GM10248 (cell line): ENCODE measurements at regions of chr9 and their contacts with region 1.

Region 1: DNA sequence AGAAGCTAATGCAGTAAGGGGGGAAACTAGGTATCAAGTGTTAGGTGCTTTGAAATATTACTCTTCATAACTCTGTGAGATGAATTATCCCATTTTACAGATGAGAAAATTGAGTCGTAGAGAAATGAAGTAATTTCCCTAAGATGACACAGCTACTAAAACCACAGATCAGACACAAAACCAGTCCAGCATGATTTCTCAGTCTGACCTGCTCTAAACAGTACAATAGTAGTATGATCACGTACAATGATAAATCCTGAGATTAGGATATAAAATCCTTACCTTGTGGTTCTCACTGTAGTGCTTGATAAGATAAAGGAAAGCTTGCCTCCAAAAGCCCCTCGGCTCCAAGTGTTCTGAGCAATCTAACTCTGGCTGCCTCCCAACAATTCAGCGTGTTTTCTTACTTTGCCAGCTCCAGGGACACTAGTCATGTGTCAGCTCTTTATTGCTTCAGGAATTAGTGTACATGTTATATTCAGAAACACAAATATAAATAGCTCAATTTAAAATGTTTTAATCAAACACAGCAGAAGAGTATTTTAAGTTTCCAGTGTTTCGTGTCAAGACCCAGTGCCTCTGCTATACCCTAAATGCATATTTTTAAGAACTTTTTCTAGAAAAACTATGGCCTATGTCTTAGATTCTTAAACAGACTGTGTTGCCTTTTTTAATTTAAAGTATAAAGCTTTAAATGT is 243.6 kb downstream of the DENND1A start:
- DNase-seq: no peak
- CTCF ChIP-seq: no peak

Region 2: GRCh38 chr9:123658792-123659191 is 27.5 kb before region 1 on chr9:
- CTCF ChIA-PET with region 1: no interaction called
- POLR2A ChIA-PET with region 1: no interaction called
- DNase-seq: peak; percentile 22
- CTCF ChIP-seq: no peak

Region 3: DNA sequence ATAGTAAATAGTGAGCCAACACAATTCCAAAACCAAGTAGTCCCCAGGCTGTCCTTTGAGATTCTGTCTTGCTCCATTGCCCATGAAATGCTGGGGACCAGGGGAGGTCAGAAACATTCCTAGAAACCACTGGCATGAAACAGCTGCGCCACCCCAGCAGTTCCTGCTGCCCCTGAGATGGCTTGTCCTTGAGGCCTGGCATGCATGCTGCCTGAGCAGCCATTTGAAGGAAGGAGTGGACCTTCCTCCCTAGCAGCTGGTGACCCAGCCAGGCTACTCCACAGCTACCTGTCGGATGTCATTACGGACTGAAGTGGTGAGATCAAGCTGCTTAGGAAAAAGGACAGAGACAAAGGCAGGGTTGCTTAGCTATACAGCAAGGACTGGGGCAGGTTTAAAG is 16.9 kb before region 1 on chr9:
- CTCF ChIA-PET with region 1: no interaction called
- POLR2A ChIA-PET with region 1: no interaction called
- DNase-seq: no peak
- CTCF ChIP-seq: no peak

Region 4: DNA sequence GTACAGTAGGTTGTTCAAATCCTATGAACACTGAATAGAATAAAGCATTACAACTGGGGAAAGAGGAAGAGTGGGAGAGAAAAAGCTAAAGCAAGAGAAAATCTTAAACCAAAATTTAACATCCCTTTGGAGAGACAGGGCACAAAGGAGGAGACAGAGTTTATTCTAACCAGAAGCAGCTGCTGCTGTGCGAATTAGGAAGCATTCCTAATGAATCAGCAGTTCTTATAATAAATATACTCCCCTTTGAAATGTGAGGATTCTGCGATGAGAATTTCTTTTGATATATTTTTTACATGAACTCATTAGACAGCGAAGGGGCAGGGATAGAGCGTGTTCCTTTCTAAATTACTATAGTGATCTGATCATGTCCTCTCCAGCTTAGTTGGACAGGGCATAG is 10.2 kb after region 1 on chr9:
- CTCF ChIA-PET with region 1: interaction called, 43 read pairs
- POLR2A ChIA-PET with region 1: no interaction called
- DNase-seq: no peak
- CTCF ChIP-seq: no peak

Region 5: DNA sequence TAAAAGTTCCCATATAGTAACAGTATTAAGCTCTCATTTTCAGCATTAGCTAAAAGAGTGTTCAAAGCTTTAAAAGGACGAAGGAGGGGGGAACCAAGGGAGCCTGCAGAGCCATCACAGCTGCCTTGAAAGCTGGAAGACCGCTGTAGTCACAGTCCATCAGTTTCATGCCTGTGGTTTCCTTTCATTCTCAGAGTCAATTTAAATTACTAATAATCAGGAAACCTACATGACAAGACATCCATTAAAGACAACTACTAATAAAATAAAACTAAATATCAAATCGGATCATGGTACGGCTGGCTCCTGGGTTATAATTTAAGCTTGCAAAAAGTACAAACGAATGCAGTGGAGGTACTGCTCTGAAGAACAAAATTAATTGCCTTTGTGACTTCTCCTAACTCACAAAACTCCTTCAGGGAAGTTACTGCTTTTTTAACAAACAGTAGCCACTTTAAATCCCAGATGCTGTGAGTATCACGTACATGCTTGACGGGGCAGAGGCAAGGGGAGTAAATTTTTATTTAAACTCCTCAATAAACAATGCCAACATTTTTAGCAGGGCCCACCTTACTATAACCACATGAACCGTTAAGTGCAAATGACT is 30.2 kb after region 1 on chr9:
- CTCF ChIA-PET with region 1: no interaction called
- POLR2A ChIA-PET with region 1: no interaction called
- DNase-seq: no peak
- CTCF ChIP-seq: no peak